ENCODE measurements at regions of chr2 and their contacts with region 1.

Region 1: DNA sequence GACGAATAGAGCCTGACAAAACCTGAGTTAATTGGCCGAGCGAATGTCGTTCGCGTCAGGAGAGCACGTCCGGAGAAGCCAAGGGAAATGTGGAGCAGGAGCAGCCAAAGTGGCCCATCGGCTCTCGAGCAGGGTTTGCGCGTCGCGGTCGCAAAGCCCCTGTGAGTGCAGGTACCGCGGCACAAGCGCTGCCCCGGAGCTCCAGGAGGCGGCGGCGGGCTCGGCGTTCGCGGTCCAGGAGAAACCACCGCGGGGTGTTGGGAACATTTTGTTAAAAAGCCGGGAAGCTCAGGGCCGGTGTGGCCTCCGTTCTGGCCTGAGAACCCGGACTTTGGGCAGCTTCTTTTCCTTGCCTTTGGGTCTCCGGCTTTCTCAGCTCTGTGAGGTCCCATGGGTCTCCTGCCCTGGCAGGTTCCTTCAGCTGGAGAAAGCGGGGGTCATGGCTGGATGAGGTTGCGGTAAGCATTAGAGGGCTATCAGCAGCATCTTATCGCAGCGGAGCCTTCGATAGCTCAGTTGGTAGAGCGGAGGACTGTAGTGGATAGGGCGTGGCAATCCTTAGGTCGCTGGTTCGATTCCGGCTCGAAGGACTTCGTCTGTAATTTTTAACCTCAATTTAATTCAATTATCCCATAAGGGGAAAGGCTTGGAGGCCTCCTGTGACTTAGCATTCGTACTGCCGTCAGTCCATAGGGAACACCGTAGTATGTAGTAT is 1.0 kb upstream of the AGBL5 start:
- DNase-seq: peak; percentile 81 to 91
- ATAC-seq: peak; percentile 80 to 83
- H3K4me3 ChIP-seq: peak overlapping the region; percentile 78 to 92 (median 84)
- H3K27ac ChIP-seq: peak overlapping the region; percentile 93 to 96 (median 93)
- H3K4me1 ChIP-seq: peaks cover 11 to 13% of the 10 kb centered on the region in 2 donors
- H3K27me3 ChIP-seq: no peaks in the 10 kb centered on the region
- CTCF ChIP-seq: peak; percentile 61 to 73 (median 67)
- POLR2A ChIP-seq: peak in 1 of 2 donors; percentile 9

Region 2: GRCh38 chr2:27032495-27033252 is 17.8 kb before region 1 on chr2 and contains the start of gene TMEM214:
- in situ Hi-C with region 1: no loop called
- intact Hi-C with region 1: loop called (anchors 1 kb)
- DNase-seq: peak; percentile 75 to 86
- ATAC-seq: peak; percentile 91
- H3K4me3 ChIP-seq: peak within 1 kb of the TSS; percentile 84 to 97 (median 89)
- H3K27ac ChIP-seq: peak within 1 kb of the TSS; percentile 86 to 93 (median 91)
- H3K4me1 ChIP-seq: peaks cover 14 to 16% of the 10 kb centered on the region in 2 donors
- H3K27me3 ChIP-seq: no peaks in the 10 kb centered on the region
- CTCF ChIP-seq: peak in 3 of 5 experiments; percentile 31 to 37 (median 35)
- POLR2A ChIP-seq: peak; percentile 87 to 90
- total RNA-seq, gene TMEM214: 20.0 to 37.7 (median 24.9) TPM

Region 3: GRCh38 chr2:27071277-27071989 is 21.0 kb after region 1 on chr2 and contains the start of gene OST4:
- in situ Hi-C with region 1: no loop called
- intact Hi-C with region 1: loop called (anchors 2 kb)
- DNase-seq: peak; percentile 90 to 91
- ATAC-seq: peak; percentile 95
- H3K4me3 ChIP-seq: peak within 1 kb of the TSS; percentile 83 to 98 (median 89)
- H3K27ac ChIP-seq: peak within 1 kb of the TSS; percentile 91 to 97 (median 92)
- H3K4me1 ChIP-seq: peaks cover 29 to 31% of the 10 kb centered on the region in 2 donors
- H3K27me3 ChIP-seq: no peaks in the 10 kb centered on the region
- CTCF ChIP-seq: no peak
- POLR2A ChIP-seq: peak; percentile 79 to 88
- total RNA-seq, gene OST4: 191 to 283 (median 251) TPM